ENCODE measurements at regions of chr19 and their contacts with region 1.

Region 1: GRCh38 chr19:47296036-47296435 is 13.6 kb upstream of the C5AR1 start:
- DNase-seq: peak; percentile 80 to 86 (median 83)
- H3K4me3 ChIP-seq: no peak overlapping the region
- H3K27ac ChIP-seq: no peak overlapping the region
- H3K4me1 ChIP-seq: peaks cover 0 to 9% (median 8%) of the 10 kb centered on the region in 4 experiments
- H3K27me3 ChIP-seq: peaks cover 0 to 7% (median 4%) of the 10 kb centered on the region in 5 experiments

Region 2: GRCh38 chr19:47309608-47310007 is 13.6 kb after region 1 on chr19 and contains the start of gene C5AR1:
- CTCF ChIA-PET with region 1: interaction called, 12 read pairs
- POLR2A ChIA-PET with region 1: no interaction called
- DNase-seq: no peak
- H3K4me3 ChIP-seq: peak within 1 kb of the TSS in 1 of 7 experiments; percentile 68
- H3K27ac ChIP-seq: no peak within 1 kb of the TSS
- H3K4me1 ChIP-seq: peaks cover 0 to 5% (median 2%) of the 10 kb centered on the region in 4 experiments
- H3K27me3 ChIP-seq: peaks cover 0 to 55% (median 18%) of the 10 kb centered on the region in 5 experiments

Region 3: DNA sequence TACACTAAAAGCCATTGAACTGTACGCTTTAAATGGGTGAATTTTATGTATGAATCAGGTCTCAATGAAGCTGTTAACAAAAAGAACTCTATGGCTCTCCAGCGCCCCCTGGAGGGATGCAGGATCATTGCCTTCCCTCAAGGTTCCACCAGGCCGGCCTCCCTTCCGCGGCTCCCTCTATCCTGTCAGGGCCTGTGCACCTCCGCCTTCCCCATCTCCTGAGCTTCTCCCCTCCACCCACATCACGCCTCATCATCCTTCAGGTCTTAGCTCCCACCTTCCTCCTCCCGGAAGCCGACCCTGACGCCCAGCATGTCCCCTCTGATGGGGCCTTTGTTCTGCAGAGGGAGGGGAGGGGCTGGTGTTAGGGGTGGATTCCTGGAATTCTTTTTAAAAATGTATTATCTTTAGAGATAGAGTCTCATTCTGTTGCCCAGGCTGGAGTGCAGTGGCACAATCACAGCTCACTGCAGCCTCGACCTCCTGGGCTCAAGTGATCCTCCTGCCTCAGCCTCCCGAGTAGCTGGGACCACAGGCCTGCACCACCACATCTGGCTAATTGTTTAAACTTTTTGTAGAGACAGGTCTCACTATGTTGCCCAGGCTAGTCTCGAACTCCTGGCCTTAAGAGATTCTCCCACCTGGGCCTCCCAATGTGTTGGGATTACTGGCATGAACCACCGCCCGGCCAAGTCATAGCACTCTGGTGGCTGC is 95.6 kb after region 1 on chr19:
- CTCF ChIA-PET with region 1: interaction called, 138 read pairs
- POLR2A ChIA-PET with region 1: no interaction called
- DNase-seq: peak; percentile 74 to 87 (median 78)
- H3K4me3 ChIP-seq: no peak overlapping the region
- H3K27ac ChIP-seq: no peak overlapping the region
- H3K4me1 ChIP-seq: no peaks in the 10 kb centered on the region
- H3K27me3 ChIP-seq: peaks cover 0 to 8% (median 0%) of the 10 kb centered on the region in 5 experiments